Activated CD4-positive, alpha-beta T cell treated with anti-CD3 and anti-CD28 coated beads for 36 hours (primary cell): ENCODE measurements at regions of chr5 and their contacts with region 1.

Region 1: DNA sequence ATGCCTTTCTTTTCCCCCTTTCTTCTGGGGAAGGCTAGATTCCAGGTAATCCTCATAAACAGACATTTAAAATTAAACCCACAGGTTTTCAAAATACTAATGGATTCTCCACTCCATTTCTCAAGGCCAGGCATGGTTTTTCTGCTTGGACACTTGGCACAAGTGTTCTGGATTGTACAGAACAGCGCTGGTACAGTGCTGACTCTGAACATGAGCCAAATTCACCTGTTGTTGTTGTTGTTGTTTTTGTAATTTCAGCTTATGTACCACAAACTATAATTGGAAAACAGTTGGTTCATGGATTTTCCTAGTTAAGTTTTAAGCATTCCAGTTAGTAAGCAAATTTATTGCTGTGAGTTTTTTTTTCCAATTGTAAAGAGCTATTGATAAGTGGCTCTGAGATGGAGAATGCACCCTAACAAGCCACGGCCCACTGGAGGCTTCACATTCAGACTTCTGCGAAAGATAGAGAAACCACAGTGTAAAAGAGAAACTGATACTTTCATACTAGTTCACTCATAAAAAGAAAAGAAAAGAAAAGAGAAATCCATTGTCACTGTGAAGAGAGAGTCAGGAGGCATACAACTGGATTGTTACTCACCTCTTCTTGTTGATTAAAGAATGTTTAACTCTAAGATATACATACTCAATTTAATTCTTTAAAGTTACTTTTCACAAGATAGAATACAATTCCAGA is 16.2 kb upstream of the ITGA1 start:
- DNase-seq: peak; percentile 63
- ATAC-seq: peak; percentile 91
- H3K4me3 Mint-ChIP-seq: no peak overlapping the region
- H3K27ac Mint-ChIP-seq: peak overlapping the region; percentile 25
- H3K4me1 Mint-ChIP-seq: peaks cover 34% of the 10 kb centered on the region
- H3K27me3 Mint-ChIP-seq: peaks cover 11% of the 10 kb centered on the region

Region 2: GRCh38 chr5:52725065-52725746 is 46.3 kb before region 1 on chr5:
- CTCF ChIA-PET with region 1: no interaction called
- POLR2A ChIA-PET with region 1: no interaction called
- intact Hi-C with region 1: loop called in 1 of 2 experiments (anchors 5 kb)
- DNase-seq: peak; percentile 63
- ATAC-seq: peak; percentile 96
- H3K4me3 Mint-ChIP-seq: no peak overlapping the region
- H3K27ac Mint-ChIP-seq: peak overlapping the region; percentile 48
- H3K4me1 Mint-ChIP-seq: peaks cover 40% of the 10 kb centered on the region
- H3K27me3 Mint-ChIP-seq: no peaks in the 10 kb centered on the region

Region 3: GRCh38 chr5:52743970-52744369 is 27.5 kb before region 1 on chr5:
- CTCF ChIA-PET with region 1: no interaction called
- POLR2A ChIA-PET with region 1: no interaction called
- intact Hi-C with region 1: loop called in 1 of 2 experiments (anchors 1 kb)
- DNase-seq: peak; percentile 53
- ATAC-seq: peak; percentile 97
- H3K4me3 Mint-ChIP-seq: no peak overlapping the region
- H3K27ac Mint-ChIP-seq: no peak overlapping the region
- H3K4me1 Mint-ChIP-seq: peaks cover 41% of the 10 kb centered on the region
- H3K27me3 Mint-ChIP-seq: no peaks in the 10 kb centered on the region